ENCODE measurements at regions of chr11 and their contacts with region 1.

Region 1: DNA sequence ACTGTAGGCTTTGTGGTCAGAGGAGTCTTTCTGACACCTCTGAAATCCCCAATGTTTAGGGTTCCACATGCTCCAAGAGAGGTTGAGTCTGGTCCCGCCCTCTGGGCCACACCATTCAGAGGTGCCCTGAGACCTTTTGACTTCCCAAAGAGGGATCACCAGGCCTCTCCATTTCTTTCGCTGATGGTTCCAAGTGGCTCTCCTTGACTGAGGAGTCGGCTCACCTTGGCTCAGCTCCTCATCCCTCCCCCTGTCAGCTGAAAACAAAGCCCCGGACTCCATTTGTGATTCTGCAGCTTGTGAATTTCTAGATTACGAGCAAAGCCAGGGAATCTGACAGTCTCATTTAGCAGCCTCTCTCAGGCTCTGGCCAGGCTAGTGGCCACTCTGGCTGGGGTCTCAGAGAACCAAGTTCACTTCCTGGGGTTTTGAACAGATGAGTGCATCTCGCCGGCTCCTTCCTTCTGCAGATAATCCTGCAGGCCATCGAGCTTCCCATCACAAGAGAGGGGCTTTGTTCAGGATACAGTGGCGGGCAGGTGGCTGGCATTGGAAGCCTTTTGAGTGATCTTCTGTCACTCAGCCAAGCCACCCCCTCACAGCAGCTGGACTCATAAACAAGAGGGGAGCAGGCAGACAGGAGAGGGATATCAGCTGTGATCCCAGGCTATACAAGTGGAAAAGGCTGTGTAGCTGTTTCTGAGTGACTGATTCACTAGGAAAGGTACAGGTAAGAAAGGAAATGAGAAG is 102.9 kb downstream of the TRIM29 start:
- DNase-seq: no peak
- H3K4me3 ChIP-seq: no peak overlapping the region
- H3K27ac ChIP-seq: no peak overlapping the region
- H3K4me1 ChIP-seq: no peaks in the 10 kb centered on the region
- H3K27me3 ChIP-seq: no peaks in the 10 kb centered on the region
- CTCF ChIP-seq: no peak
- POLR2A ChIP-seq: no peak

Region 2: GRCh38 chr11:118956094-118956846 is 1078.8 kb before region 1 on chr11 and contains the start of gene UPK2:
- intact Hi-C with region 1: no loop called
- DNase-seq: peak; percentile 82 to 90
- H3K4me3 ChIP-seq: no peak within 1 kb of the TSS
- H3K27ac ChIP-seq: no peak within 1 kb of the TSS
- H3K4me1 ChIP-seq: no peaks in the 10 kb centered on the region
- H3K27me3 ChIP-seq: peaks cover 0 to 1% of the 10 kb centered on the region in 2 donors
- CTCF ChIP-seq: peak; percentile 94 to 98 (median 97)
- POLR2A ChIP-seq: no peak
- total RNA-seq, gene UPK2: not detected

Region 3: GRCh38 chr11:119764108-119764868 is 270.8 kb before region 1 on chr11:
- intact Hi-C with region 1: no loop called
- DNase-seq: peak in 1 of 2 donors; percentile 50
- H3K4me3 ChIP-seq: no peak overlapping the region
- H3K27ac ChIP-seq: peak overlapping the region in 1 of 2 donors; percentile 25
- H3K4me1 ChIP-seq: no peaks in the 10 kb centered on the region
- H3K27me3 ChIP-seq: peaks cover 0 to 6% of the 10 kb centered on the region in 2 donors
- CTCF ChIP-seq: no peak
- POLR2A ChIP-seq: no peak

Region 4: DNA sequence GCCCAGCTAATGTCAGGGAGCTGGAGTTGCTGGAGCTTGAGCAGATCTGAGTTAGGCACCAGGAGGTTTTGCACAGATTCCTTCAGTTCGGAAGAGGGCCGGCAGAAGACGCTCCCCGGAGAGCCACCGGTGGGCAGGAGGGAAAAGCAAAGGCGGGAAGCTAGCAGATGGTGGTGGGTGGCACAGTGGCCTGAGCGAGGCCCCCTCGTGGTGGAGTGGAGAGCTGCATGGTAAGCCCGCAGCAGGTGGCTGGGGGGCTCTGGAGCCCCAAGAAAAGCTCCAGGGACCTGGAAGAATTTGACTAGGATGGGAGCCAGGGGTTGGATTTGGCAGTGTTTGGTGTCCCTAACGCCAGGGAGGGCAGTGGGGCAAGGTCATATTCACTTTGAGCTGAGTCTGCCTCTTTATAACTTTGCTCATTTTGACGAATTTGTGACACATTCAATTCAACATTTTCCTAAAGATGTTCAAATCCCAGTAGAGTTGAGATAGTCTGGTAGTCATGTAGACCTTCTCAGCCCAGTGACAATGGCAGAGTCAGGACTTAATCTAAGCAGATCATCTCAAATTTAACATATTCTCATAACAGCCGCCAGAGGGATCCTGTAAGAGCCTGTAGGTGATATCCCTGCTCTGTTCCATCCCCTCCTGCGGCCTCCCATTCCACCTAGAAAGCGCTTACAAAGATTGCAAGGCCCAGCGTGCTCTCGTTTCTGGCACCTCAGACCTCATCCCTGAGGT is 44.9 kb after region 1 on chr11:
- intact Hi-C with region 1: loop called (anchors 5 kb)
- DNase-seq: no peak
- H3K4me3 ChIP-seq: no peak overlapping the region
- H3K27ac ChIP-seq: no peak overlapping the region
- H3K4me1 ChIP-seq: no peaks in the 10 kb centered on the region
- H3K27me3 ChIP-seq: no peaks in the 10 kb centered on the region
- CTCF ChIP-seq: peak in 2 of 3 donors; percentile 12 to 51
- POLR2A ChIP-seq: no peak

Region 5: GRCh38 chr11:120192831-120193625 is 158.0 kb after region 1 on chr11:
- intact Hi-C with region 1: loop called (anchors 5 kb)
- DNase-seq: no peak
- H3K4me3 ChIP-seq: no peak overlapping the region
- H3K27ac ChIP-seq: no peak overlapping the region
- H3K4me1 ChIP-seq: no peaks in the 10 kb centered on the region
- H3K27me3 ChIP-seq: no peaks in the 10 kb centered on the region
- CTCF ChIP-seq: no peak
- POLR2A ChIP-seq: no peak